Endothelial cell of umbilical vein (primary cell): ENCODE measurements at regions of chr3 and their contacts with region 1.

Region 1: GRCh38 chr3:136675150-136675858 is 76.9 kb downstream of the STAG1 start:
- DNase-seq: no peak
- H3K4me3 ChIP-seq: no peak overlapping the region
- H3K27ac ChIP-seq: no peak overlapping the region
- H3K4me1 ChIP-seq: no peaks in the 10 kb centered on the region
- H3K27me3 ChIP-seq: no peaks in the 10 kb centered on the region
- CTCF ChIP-seq: no peak
- POLR2A ChIP-seq: no peak

Region 2: DNA sequence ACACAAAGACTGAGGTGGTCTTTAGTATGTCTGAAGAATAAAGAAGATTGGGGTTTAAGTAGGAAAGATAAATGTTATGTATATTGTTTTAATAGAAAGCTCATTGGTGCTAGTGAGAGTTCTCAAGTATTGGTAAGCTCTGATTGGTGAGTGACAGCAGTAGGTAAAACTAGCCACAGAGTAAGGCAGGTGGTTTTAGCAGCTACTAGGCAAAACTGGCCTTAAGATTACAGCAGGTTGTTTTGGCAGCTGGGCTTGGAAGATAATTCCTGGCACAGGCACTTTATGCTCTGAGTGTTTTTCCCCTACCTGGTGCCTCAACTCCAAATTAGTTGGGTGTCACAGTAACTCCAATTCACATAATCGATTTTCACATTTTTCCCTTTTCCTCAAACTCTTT is 10.6 kb after region 1 on chr3:
- CTCF ChIA-PET with region 1: interaction called, 10 read pairs
- POLR2A ChIA-PET with region 1: no interaction called
- dilution Hi-C with region 1: no loop called
- intact Hi-C with region 1: no loop called
- DNase-seq: no peak
- H3K4me3 ChIP-seq: no peak overlapping the region
- H3K27ac ChIP-seq: no peak overlapping the region
- H3K4me1 ChIP-seq: no peaks in the 10 kb centered on the region
- H3K27me3 ChIP-seq: no peaks in the 10 kb centered on the region
- CTCF ChIP-seq: no peak
- POLR2A ChIP-seq: no peak

Region 3: DNA sequence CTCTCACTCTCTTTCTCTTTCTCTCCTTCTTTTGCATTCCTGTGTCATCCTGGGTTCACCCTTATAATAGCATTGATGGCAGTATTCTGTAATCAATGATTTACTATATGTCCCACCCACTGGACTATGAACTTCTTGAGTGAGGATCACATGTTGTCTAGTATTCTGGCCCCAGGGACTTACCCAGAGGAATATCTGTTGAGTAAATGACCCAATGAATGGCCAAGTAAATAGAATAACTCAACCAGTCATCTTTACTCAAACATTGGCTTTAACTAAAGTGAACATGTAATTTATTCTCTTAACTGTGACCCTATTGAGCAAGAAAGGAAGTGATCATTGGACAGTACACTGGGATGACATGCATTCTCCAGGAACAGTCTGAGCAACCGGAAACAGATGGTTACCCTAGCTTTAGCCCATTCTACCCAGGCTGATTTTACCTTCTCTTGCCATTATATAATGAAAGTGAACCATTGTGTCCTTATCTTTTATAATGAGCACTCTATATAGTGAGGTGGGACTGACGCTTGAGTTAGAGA is 994.3 kb after region 1 on chr3:
- CTCF ChIA-PET with region 1: no interaction called
- POLR2A ChIA-PET with region 1: no interaction called
- dilution Hi-C with region 1: no loop called
- intact Hi-C with region 1: no loop called
- DNase-seq: no peak
- H3K4me3 ChIP-seq: no peak overlapping the region
- H3K27ac ChIP-seq: no peak overlapping the region
- H3K4me1 ChIP-seq: no peaks in the 10 kb centered on the region
- H3K27me3 ChIP-seq: no peaks in the 10 kb centered on the region
- CTCF ChIP-seq: no peak
- POLR2A ChIP-seq: no peak